Testis (tissue), 5 donors: ENCODE measurements at regions of chr4 and their contacts with region 1.

Region 1: GRCh38 chr4:150242820-150243458 is 164.7 kb downstream of the DCLK2 start:
- DNase-seq: peak; percentile 46
- H3K4me3 ChIP-seq: no peak overlapping the region
- H3K27ac ChIP-seq: no peak overlapping the region
- H3K4me1 ChIP-seq: no peaks in the 10 kb centered on the region
- H3K27me3 ChIP-seq: no peaks in the 10 kb centered on the region
- CTCF ChIP-seq: peak; percentile 44 to 88 (median 62)
- POLR2A ChIP-seq: no peak

Region 2: GRCh38 chr4:149999485-150000074 is 243.4 kb before region 1 on chr4:
- intact Hi-C with region 1: loop called (anchors 10 kb)
- DNase-seq: peak; percentile 35
- H3K4me3 ChIP-seq: no peak overlapping the region
- H3K27ac ChIP-seq: no peak overlapping the region
- H3K4me1 ChIP-seq: peaks cover 8% of the 10 kb centered on the region
- H3K27me3 ChIP-seq: no peaks in the 10 kb centered on the region
- CTCF ChIP-seq: peak; percentile 17 to 48 (median 29)
- POLR2A ChIP-seq: no peak